ENCODE measurements at regions of chr4 and their contacts with region 1.

Region 1: DNA sequence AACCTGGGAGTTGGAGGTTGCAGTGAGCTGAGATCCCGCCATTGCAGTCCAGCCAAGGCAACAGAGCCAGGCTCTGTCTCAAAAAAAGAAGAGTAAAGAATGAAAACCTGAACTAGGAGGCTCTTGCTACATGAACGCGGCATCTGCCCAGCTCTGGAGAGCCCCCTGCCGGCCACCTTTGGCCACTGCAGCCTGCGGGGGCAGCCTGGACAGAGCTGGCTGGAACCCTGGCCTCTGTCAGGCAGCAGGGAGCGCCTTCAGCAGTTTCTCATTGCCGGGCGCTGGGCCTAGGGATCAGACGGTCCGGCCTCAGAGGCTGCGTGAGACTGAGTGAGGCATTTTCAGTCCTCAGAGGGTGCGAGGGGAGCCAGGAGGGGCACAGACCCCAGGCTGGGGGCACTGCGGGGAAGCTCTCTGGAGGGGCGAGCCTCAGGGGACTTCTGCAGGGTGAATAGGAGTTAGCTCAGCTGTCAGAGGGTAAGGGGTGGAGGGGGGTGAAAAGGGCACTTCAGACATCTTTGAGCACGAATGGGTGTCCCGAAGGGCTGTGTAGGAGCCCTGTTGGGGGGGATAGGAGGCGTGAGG is 17.5 kb downstream of the DOK7 start:
- DNase-seq: no peak
- H3K4me3 ChIP-seq: no peak overlapping the region
- H3K27me3 ChIP-seq: no peaks in the 10 kb centered on the region; the same call in 1 of the 2 replicates
- CTCF ChIP-seq: peak; percentile 100

Region 2: DNA sequence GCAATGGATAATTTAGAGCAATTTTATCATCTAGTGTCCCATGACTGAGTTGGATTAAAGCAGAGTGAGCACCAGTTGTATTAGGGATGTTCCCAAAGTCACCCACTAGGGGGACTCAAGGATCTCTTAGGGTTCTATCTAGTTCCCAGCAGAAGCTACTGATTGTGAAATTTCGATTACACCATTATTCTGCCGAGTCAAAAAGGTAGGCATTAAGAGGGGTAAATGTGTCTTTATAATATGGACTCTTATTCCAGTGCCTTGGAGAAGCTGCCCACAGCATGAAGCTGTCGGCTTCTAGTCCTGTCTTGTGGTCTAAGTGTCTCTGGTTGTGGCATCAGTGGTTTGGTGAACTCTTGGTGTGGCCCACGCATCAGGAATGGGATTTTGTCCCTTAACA is 134.5 kb before region 1 on chr4:
- CTCF ChIA-PET with region 1: interaction called, 12 read pairs
- POLR2A ChIA-PET with region 1: no interaction called
- DNase-seq: peak; percentile 35
- H3K4me3 ChIP-seq: no peak overlapping the region
- H3K27me3 ChIP-seq: no peaks in the 10 kb centered on the region
- CTCF ChIP-seq: peak; percentile 86

Region 3: DNA sequence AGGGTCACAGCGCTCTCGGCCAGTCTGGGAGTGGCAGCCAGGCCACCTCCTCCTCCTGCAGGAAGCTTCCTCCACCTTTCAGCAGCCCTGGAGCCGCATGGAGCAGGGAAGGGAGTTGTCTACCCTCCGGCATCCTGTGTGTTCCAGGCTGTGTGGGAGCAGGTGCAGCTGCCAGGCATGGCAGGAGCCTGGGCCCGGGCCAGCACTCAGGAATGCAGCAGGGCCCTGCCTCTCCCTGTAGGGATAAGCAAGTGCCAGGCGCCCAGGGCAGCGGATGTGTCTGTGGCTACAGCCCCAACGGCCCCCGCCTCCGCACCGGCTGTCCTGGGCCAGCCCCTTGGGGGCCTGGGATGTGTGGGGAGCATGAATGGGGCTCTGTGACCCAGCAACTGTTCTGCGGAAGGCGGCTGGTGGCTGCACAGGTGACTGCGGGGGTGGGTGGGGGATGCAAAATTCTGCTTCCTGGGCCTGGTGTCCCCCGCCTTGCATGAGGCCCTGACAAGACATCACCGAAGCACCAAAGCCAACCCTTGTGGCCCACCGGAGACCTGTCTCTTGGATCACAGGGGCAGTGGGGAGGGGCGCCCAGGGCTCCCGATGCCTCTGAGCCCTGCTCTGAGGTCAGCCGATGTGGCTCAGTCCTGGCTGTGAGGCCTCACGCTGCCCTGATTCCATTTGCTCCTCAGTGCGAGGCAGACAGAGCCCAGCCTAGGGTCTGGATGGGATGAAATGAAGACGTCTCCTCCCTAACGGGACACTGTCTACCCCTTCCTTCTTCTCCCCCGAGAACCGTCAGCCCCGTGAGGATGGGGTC is 18.9 kb before region 1 on chr4:
- CTCF ChIA-PET with region 1: interaction called, 11 read pairs
- POLR2A ChIA-PET with region 1: no interaction called
- DNase-seq: no peak
- H3K4me3 ChIP-seq: no peak overlapping the region
- H3K27me3 ChIP-seq: peaks cover 36% of the 10 kb centered on the region
- CTCF ChIP-seq: no peak

Region 4: DNA sequence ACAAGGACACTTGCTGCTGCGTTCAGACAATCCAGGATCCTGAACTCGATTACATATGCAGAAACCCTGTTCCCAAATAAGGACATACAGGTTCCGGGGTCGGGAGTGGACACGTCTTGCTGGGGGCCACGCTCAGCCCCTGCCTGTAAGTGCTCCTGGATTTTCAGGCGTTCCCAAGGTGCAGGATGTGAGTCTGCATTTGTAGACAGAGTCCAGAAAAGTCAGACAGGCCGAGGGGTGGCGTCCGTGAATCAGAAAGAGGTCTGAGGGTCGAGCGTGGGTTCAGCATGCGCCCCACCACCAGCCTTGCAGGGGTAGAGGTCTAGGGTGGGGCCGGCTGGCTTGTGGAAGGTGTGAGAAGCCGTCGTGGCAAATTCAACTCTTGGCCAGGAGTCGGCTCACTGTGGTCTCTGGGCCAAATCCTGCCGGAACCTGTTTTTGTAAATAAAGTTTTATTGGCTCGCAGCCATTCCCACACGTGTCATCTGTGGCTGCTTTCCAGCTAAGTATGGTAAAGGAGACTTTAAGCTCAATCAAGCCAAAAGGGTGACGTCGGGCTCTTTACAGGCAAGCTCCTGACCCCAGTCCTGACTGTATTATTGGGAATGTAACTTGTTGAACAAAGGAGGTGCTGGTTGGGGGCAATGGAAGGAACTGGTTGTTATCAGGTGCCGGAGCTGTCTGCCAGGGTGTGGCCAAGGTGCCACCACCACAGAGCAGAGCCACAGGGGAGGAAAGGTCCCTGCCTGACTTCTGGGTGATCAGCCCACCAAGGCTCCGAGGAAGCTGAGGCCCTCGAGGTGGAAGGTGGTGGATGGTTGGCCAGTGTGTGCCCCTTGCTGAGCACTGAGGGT is 10.1 kb before region 1 on chr4:
- CTCF ChIA-PET with region 1: interaction called, 22 read pairs
- POLR2A ChIA-PET with region 1: no interaction called
- DNase-seq: no peak
- H3K4me3 ChIP-seq: no peak overlapping the region
- H3K27me3 ChIP-seq: peaks cover 2% of the 10 kb centered on the region
- CTCF ChIP-seq: no peak

Region 5: DNA sequence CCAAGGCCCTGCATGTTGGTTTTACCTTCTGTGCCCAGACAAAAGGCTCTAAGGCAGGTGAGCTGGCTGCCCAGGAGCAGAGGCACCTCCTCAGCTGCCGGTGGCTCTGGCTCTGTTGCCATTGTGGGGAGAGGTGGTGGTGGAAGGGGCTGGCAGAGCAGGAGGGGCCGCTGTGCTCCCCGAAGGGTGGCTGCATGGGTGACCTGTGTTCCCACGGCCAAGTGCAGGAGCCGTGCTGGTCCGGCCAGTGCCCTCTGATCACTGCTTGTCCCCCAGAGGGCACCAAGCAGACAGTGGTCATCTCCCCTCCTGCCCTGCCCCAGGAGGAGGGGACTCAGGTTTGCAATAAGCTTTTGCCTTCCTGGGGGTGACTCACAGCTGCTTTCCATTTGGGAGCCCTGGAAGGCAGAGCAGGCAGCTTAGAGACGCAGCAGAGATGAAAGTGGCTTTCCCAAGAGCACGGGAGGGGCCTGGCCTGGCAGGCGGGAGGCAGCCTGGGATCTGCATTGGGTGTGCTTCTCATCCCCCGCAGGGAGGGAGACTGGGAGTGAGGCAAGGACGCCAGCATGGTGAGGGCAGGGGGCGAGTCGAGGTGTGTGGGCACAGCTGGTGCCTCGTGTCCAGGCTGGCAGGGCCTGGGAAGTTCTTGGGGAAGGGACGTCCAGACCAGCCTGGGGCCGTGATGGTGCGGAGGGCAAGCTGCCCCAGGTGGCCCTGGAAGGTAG is 11.2 kb after region 1 on chr4:
- CTCF ChIA-PET with region 1: interaction called, 18 read pairs
- POLR2A ChIA-PET with region 1: no interaction called
- DNase-seq: peak; percentile 10
- H3K4me3 ChIP-seq: no peak overlapping the region
- H3K27me3 ChIP-seq: peaks cover 2% of the 10 kb centered on the region
- CTCF ChIP-seq: no peak